ENCODE measurements at regions of chr2 and their contacts with region 1.

Region 1: DNA sequence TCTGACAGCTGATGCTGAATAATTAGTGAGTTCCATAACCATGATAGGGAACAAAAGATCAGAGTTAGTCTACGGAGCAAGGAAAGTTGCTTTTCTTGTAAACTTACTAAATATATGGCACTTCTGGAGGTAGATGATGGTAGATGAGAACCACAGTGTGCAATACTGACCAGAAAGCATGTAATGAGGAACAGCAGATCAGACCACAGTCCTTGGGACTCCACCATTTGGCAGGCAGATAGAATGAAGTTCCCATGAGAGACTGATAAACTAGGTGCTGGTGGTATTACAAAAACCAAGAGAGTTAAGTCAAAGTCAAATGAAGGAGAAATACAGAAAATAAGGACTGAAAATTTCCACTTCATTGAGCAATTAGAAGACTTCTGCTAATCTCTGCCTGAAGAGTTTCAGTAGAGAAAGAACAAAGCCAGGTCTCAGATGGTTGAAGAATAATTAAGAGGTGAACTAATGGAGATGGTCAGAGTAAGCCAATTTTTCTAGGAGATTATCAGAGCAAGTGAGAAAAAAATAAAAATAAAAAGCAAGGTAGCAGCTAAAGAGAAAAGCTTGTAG is 10.4 kb downstream of the CERKL start:
- DNase-seq: no peak
- ATAC-seq: no peak
- H3K4me3 ChIP-seq: no peak overlapping the region
- H3K27ac ChIP-seq: no peak overlapping the region
- H3K4me1 ChIP-seq: no peaks in the 10 kb centered on the region
- H3K27me3 ChIP-seq: peaks cover 0 to 30% (median 3%) of the 10 kb centered on the region in 9 donors
- CTCF ChIP-seq: no peak
- POLR2A ChIP-seq: no peak

Region 2: DNA sequence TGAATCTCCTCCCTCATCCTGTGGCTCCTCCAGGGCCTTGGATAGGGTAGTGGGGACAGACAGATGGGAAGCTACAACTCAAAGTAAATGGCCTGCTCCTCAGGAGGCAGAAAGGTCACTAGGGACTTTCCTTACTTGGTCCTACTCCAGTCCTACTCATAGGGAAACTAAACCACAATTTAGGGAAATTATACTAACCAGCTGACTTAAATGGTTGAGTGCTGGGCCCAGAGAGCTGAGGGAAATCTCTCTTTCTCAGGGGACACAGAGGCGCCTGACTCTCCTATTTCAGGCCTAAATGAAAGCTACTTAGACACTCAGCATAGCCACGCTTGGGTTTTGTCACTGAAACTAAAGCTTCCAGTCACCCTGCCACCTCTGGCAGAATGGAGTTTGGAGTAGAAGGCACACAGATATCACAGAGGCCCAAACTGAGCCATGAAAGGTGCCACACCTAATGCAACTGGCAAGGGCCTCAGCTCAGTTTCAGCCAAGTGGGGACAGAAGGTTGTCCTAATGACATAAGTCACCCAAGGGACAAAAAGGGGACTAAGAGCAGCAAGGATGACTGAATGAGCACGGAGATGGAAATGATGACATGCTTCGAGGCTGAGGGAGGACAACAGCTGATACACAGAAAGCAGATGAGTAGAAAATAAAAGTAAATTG is 13.6 kb before region 1 on chr2:
- intact Hi-C with region 1: loop called in 1 of 10 experiments (anchors 2 kb)
- DNase-seq: no peak
- ATAC-seq: no peak
- H3K4me3 ChIP-seq: no peak overlapping the region
- H3K27ac ChIP-seq: no peak overlapping the region
- H3K4me1 ChIP-seq: no peaks in the 10 kb centered on the region
- H3K27me3 ChIP-seq: peaks cover 0 to 10% (median 0%) of the 10 kb centered on the region in 9 donors
- CTCF ChIP-seq: no peak
- POLR2A ChIP-seq: no peak